GM10248 (cell line): ENCODE measurements at regions of chr22 and their contacts with region 1.

Region 1: DNA sequence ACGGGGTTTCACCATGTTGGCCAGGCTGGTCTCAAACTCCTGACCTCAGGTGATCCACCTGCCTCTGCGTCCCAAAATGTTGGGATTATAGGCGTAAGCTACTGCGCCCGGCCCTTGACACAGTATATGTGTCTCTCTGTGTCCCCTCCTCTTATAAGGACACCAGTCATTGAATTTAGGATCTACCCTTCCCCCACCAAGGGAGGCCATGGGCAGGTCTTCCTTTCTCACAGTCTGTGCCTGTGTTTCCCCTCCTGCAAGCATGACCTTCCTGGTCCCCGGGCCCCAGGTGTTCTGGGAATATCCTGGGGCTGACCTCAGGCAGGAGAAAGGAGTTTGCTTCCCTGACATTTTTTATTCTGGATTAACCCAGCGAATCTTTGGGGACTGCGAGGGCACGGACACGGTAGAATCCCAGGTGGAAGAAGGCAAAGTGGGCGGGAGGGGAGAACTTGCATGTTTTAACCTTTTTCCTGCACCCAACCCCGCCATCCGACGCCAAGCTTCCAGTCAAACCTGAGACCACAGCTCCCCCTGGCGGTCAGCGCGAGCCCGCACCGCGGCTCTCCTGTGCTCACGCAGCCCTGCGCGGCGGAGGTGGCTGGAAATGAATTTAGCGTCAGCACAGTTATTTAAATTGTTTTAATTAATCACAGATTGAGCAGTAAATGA is 42.1 kb upstream of the ISX start:
- DNase-seq: peak; percentile 79
- CTCF ChIP-seq: peak; percentile 96

Region 2: DNA sequence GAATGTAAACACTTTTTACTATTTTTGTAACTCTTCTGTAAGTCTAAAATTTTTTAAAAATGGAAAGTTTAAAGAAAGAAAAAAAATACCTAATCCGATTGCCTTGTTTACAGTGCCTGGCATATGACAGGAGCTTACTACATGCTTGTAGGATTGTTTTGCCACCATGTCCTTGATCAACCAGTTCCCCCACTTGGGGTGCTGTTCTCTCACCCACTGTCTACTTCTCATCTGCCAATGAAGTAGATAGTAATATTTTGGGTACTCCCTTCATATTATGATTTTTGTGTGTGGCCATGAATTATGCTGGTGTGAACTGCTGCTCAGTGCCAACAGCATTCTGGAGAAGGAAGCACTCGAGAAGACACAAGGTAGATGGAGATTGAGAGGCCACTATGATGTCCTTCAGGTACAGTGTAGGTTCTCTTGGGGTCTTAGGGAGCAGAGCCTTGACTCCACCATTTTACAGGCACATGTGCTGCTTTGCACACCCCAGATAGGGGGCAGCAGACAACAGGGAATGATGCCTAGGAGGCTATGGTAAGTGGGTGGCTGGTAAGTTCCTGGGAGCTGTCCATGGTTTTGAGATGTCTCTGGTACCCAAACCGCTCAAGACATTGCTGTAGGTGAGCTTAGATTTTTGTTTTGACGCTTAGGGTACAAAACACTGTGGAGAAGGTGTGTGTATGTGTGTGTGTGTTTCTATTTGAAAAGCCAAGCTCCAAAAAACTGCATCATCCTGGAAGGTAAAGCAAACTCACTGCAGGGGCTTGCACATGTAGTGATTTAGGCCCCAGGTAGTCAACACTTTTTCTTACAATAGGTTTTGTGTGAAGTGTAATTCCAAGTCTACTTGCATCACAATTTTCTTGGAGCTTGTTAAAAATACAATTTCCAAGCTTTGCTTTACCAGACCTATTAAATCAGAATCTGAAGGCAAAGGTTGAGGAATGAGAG is 609.1 kb before region 1 on chr22:
- CTCF ChIA-PET with region 1: interaction called, 15 read pairs
- POLR2A ChIA-PET with region 1: no interaction called
- DNase-seq: peak; percentile 16
- CTCF ChIP-seq: peak; percentile 72

Region 3: DNA sequence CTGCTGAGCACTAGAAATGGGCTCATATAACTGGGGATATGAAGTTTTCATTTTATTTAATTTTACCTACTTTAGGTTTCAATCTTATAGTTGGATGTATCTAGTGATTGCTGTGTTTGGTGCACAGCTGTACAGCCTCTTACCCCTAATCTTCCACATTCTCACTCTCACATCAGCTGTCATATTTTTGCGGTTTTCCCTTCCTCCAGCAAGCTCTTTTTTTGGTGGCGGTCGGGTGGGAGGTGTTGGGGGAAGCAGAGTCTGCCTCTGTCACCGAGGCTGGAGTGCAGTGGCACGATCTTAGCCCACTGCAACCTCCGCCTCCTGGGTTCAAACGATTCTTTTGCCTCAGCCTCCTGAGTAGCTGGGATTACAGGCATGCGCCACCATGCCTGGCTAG is 403.0 kb before region 1 on chr22:
- CTCF ChIA-PET with region 1: no interaction called
- POLR2A ChIA-PET with region 1: no interaction called
- DNase-seq: no peak
- CTCF ChIP-seq: no peak

Region 4: DNA sequence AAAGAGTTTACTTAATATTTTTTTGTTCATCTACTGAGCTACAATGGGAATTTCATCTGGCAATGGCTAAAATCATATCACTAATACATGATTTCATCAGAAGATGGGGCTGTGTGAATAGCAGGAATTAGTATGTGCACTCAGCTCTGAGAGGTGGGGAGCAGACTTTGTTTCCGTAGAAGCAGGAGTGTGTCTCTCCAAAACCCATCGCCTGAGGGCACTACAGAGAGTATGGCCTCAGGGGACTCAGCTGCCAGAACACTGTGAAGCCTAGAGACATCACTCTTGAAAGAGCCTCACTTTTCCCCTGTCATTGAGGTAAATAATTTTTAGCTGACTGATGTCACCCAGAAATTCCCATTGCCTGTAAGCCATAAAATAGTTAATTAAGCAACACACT is 219.2 kb before region 1 on chr22:
- CTCF ChIA-PET with region 1: interaction called, 10 read pairs
- POLR2A ChIA-PET with region 1: no interaction called
- DNase-seq: no peak
- CTCF ChIP-seq: peak; percentile 0

Region 5: DNA sequence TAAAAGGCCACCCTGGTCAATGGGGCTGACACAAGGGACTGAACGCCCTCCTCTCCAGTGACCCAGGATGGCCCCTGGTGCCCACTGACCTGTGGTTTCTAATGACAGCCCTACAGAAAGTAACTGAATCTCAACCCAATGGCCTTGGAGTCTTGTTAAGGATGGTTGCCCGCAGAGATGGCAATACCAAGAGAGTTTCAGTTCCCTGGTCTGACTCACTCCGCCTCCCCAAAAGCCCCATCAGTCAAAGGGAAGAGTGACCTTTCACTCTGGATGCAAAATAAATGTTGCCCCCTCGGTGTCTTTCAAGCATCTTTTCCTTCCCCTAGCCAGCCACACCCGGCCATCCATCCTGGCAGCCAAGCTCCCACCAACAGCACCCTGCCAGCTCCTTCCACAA is 15.6 kb before region 1 on chr22:
- CTCF ChIA-PET with region 1: interaction called, 33 read pairs
- POLR2A ChIA-PET with region 1: no interaction called
- DNase-seq: no peak
- CTCF ChIP-seq: no peak

Region 6: GRCh38 chr22:35037089-35037488 is 13.3 kb after region 1 on chr22:
- CTCF ChIA-PET with region 1: interaction called, 23 read pairs
- POLR2A ChIA-PET with region 1: no interaction called
- DNase-seq: no peak
- CTCF ChIP-seq: peak; percentile 32

Region 7: GRCh38 chr22:35043252-35043931 is 19.6 kb after region 1 on chr22:
- CTCF ChIA-PET with region 1: interaction called, 23 read pairs
- POLR2A ChIA-PET with region 1: no interaction called
- DNase-seq: peak; percentile 39
- CTCF ChIP-seq: peak; percentile 59

Region 8: DNA sequence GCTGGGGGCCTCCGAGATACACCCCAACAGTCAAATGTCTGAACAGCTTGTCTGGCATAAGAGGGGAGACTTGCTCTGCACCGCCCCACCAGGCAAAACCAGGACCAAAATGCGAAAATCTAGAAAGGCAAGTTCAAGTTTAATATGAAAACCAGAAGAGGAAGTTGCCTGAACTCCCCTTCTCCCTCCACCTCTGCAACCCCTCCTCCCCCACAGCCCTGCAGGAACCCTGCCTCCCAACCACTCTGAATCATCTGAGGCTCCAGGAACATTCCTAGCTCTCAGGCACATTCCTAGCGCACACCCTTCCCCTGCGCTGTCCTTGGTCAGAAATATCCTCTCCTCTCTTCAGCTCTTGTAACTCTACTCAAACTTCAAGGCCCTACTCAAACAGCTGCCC is 78.8 kb after region 1 on chr22:
- CTCF ChIA-PET with region 1: no interaction called
- POLR2A ChIA-PET with region 1: no interaction called
- DNase-seq: peak; percentile 51
- CTCF ChIP-seq: no peak

Region 9: DNA sequence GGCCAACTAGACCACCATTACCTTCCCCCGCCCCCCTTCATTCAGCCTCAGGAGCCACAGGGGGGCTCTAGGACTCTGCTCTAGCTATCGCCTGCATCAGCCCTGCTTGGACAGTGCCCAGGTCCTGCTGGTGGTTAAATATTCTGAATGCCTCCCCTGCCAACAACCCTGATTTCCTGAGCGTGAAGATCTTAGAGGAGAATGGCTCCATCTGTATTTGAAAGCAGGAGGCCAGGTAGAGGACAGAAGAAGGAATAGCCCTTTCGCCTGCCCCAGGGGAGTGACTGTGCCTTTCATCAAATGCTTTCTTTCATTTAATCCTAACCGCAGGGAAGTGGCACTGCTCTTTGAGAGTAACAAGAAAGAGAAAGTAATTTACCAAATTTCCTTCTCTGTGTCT is 111.3 kb after region 1 on chr22:
- CTCF ChIA-PET with region 1: no interaction called
- POLR2A ChIA-PET with region 1: no interaction called
- DNase-seq: no peak
- CTCF ChIP-seq: no peak